Uterus (tissue), 4 donors: ENCODE measurements at regions of chr12 and their contacts with region 1.

Region 1: GRCh38 chr12:57621497-57622292 is 10.5 kb downstream of the ARHGEF25 start:
- DNase-seq: peak; percentile 61 to 63
- H3K4me3 ChIP-seq: peak overlapping the region; percentile 16 to 26
- H3K27ac ChIP-seq: no peak overlapping the region
- H3K4me1 ChIP-seq: peaks cover 0 to 6% of the 10 kb centered on the region in 2 donors
- H3K27me3 ChIP-seq: no peaks in the 10 kb centered on the region
- CTCF ChIP-seq: peak; percentile 93 to 97 (median 96)
- POLR2A ChIP-seq: peak in 1 of 2 donors; percentile 24

Region 2: DNA sequence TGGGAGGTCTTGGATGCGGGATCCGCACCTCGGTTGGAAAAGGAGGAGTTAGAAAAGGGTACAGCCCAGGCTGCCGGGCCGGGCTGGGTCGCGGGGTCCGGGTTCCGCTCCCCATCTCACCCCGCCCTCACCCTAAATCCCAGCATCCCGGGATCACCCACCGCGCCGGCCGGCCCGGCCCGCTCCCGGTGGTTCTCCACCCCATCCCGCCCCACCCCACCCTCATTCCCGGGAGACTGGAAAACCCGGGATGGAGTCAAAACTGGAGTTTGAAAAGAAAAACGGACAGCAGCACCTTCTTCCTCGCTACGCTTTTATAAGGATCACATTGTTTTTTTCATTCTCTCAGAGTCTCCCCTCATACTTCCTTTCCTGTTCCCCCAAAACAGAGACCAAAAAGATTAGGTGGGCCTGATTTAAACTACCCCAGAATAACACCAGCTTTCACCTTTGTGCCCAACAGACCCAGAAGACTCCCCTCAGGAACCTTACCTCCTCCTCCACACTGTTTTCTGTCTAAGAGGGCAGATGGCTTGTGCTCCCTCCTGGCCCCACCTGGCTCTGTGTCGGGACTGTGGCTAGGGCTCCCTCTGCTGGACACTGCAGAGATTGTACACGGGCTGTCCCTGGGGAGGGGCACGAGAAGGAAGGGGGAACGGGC is 159.3 kb before region 1 on chr12:
- intact Hi-C with region 1: no loop called
- DNase-seq: peak; percentile 89 to 90
- H3K4me3 ChIP-seq: peak overlapping the region; percentile 51 to 59
- H3K27ac ChIP-seq: peak overlapping the region; percentile 88 to 89
- H3K4me1 ChIP-seq: peaks cover 3 to 11% of the 10 kb centered on the region in 2 donors
- H3K27me3 ChIP-seq: no peaks in the 10 kb centered on the region
- CTCF ChIP-seq: peak; percentile 85 to 96 (median 94)
- POLR2A ChIP-seq: peak in 1 of 2 donors; percentile 38

Region 3: DNA sequence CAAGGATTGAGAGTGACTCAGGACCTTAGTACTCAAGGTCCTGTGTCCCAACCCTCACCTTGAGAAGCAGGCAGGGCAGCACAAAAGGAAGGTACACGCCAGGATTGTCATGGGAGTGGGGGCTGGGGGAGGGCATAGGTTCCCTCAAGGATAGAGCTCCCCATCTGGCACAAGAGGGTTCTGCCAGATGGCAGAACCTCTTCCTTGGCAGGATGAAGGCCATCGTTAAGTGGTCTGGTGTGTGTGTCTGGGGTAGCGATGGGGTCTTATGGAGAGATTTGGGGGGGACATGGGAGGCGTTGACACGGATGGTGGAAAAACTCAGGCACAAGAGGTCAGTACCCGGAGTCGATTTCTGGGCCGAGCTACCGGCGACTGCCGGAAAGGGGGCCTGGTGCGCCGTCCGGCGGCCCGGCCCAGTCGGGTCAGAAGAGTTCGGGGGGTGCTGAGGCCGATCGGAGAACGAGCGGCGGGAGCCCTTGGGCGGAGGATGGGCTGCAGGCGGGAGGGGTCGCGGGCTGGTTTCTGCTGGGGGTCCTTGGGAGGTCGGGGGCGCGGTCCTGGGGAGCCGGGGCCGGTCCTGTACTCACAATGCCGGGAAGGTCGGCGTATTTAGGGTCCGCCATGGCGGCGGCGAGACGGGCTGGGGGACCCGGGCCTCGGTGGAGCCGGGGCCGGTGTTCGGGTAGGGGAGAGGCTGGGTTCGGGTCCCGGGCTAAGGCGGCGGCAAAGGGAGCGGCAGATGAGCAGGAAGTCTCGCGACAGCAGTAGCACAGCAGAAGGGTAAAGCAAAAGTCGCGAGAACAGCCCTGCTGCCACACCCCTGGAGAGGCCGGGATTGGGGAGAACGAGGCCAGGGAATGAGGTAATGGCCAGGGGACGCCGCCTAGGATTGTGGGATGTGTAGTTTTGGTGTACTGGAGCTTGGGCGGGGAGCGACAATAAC is 75.0 kb before region 1 on chr12 and contains the start of gene DCTN2:
- intact Hi-C with region 1: no loop called
- DNase-seq: peak; percentile 96 to 97
- H3K4me3 ChIP-seq: peak within 1 kb of the TSS; percentile 92 to 100
- H3K27ac ChIP-seq: peak within 1 kb of the TSS; percentile 82 to 90
- H3K4me1 ChIP-seq: peaks cover 0 to 11% of the 10 kb centered on the region in 2 donors
- H3K27me3 ChIP-seq: no peaks in the 10 kb centered on the region
- CTCF ChIP-seq: peak in 1 of 4 experiments; percentile 10
- POLR2A ChIP-seq: peak in 1 of 2 donors; percentile 61
- total RNA-seq, gene DCTN2: 117 to 175 (median 126) TPM

Region 4: GRCh38 chr12:57583008-57583831 is 38.5 kb before region 1 on chr12:
- intact Hi-C with region 1: loop called (anchors 2 kb)
- DNase-seq: peak; percentile 58 to 81
- H3K4me3 ChIP-seq: no peak overlapping the region
- H3K27ac ChIP-seq: no peak overlapping the region
- H3K4me1 ChIP-seq: no peaks in the 10 kb centered on the region
- H3K27me3 ChIP-seq: no peaks in the 10 kb centered on the region
- CTCF ChIP-seq: peak; percentile 83 to 97 (median 90)
- POLR2A ChIP-seq: no peak